ENCODE measurements at regions of chr7 and their contacts with region 1.

Region 1: GRCh38 chr7:135911099-135911498 is 66.1 kb downstream of the MTPN start:
- DNase-seq: no peak
- H3K4me3 ChIP-seq: no peak overlapping the region
- H3K27ac ChIP-seq: peak overlapping the region in 1 of 4 donors; percentile 16
- H3K4me1 ChIP-seq: no peaks in the 10 kb centered on the region
- H3K27me3 ChIP-seq: no peaks in the 10 kb centered on the region
- CTCF ChIP-seq: no peak
- EP300 ChIP-seq: no peak
- POLR2A ChIP-seq: no peak

Region 2: DNA sequence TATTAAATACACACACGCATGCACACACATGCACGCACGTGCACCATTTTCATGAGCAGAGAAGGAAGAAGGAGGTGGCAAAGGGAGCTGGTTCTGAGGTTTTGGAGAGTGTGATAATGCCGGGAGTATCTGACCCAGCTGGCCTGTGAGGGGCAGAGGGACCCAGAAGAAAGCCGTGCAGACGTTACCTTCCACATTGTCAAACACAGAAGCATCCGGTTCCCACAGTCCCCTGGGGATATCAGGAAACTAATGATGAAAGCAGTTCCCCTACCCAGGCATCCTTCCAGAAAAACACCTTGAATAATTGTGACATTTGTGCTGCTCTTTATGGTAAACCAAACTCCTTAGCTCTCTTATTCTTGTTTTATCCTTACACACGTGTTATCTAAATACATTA is 76.8 kb before region 1 on chr7:
- in situ Hi-C with region 1: no loop called
- intact Hi-C with region 1: loop called (anchors 2 kb)
- DNase-seq: no peak
- H3K4me3 ChIP-seq: no peak overlapping the region
- H3K27ac ChIP-seq: no peak overlapping the region
- H3K4me1 ChIP-seq: no peaks in the 10 kb centered on the region
- H3K27me3 ChIP-seq: no peaks in the 10 kb centered on the region
- CTCF ChIP-seq: no peak
- EP300 ChIP-seq: no peak
- POLR2A ChIP-seq: no peak

Region 3: GRCh38 chr7:136116184-136116583 is 205.1 kb after region 1 on chr7:
- in situ Hi-C with region 1: no loop called
- intact Hi-C with region 1: no loop called
- DNase-seq: no peak
- H3K4me3 ChIP-seq: no peak overlapping the region
- H3K27ac ChIP-seq: no peak overlapping the region
- H3K4me1 ChIP-seq: no peaks in the 10 kb centered on the region
- H3K27me3 ChIP-seq: no peaks in the 10 kb centered on the region
- CTCF ChIP-seq: no peak
- EP300 ChIP-seq: no peak
- POLR2A ChIP-seq: no peak